RWPE1 (cell line): ENCODE measurements at regions of chr6 and their contacts with region 1.

Region 1: GRCh38 chr6:143427109-143427817 is 23.2 kb downstream of the ADAT2 start:
- DNase-seq: peak; percentile 59
- H3K27ac ChIP-seq: peak overlapping the region; percentile 45; the same call in 1 of the 2 replicates
- CTCF ChIP-seq: peak; percentile 96

Region 2: GRCh38 chr6:143232849-143233248 is 194.4 kb before region 1 on chr6:
- CTCF ChIA-PET with region 1: interaction called, 35 read pairs
- POLR2A ChIA-PET with region 1: no interaction called
- DNase-seq: peak; percentile 30
- H3K27ac ChIP-seq: no peak overlapping the region
- CTCF ChIP-seq: no peak; the same call in 1 of the 2 replicates

Region 3: GRCh38 chr6:143414769-143415168 is 12.5 kb before region 1 on chr6:
- CTCF ChIA-PET with region 1: interaction called, 11 read pairs
- POLR2A ChIA-PET with region 1: no interaction called
- DNase-seq: no peak
- H3K27ac ChIP-seq: no peak overlapping the region
- CTCF ChIP-seq: no peak